Activated CD4-positive, alpha-beta T cell treated with anti-CD3 and anti-CD28 coated beads for 36 hours (primary cell): ENCODE measurements at regions of chr11 and their contacts with region 1.

Region 1: GRCh38 chr11:8858808-8859207 is 52.2 kb upstream of the AKIP1 start:
- DNase-seq: no peak
- ATAC-seq: no peak
- H3K4me3 Mint-ChIP-seq: no peak overlapping the region
- H3K27ac Mint-ChIP-seq: no peak overlapping the region
- H3K4me1 Mint-ChIP-seq: no peaks in the 10 kb centered on the region
- H3K27me3 Mint-ChIP-seq: peaks cover 8% of the 10 kb centered on the region

Region 2: GRCh38 chr11:8870411-8871170 is 11.8 kb after region 1 on chr11:
- CTCF ChIA-PET with region 1: no interaction called
- POLR2A ChIA-PET with region 1: no interaction called
- intact Hi-C with region 1: loop called in 1 of 2 experiments (anchors 1 kb)
- DNase-seq: peak; percentile 51
- ATAC-seq: peak; percentile 55
- H3K4me3 Mint-ChIP-seq: peak overlapping the region; percentile 63
- H3K27ac Mint-ChIP-seq: no peak overlapping the region
- H3K4me1 Mint-ChIP-seq: peaks cover 10% of the 10 kb centered on the region
- H3K27me3 Mint-ChIP-seq: peaks cover 39% of the 10 kb centered on the region